H1 (cell line): ENCODE measurements at regions of chr15 and their contacts with region 1.

Region 1: DNA sequence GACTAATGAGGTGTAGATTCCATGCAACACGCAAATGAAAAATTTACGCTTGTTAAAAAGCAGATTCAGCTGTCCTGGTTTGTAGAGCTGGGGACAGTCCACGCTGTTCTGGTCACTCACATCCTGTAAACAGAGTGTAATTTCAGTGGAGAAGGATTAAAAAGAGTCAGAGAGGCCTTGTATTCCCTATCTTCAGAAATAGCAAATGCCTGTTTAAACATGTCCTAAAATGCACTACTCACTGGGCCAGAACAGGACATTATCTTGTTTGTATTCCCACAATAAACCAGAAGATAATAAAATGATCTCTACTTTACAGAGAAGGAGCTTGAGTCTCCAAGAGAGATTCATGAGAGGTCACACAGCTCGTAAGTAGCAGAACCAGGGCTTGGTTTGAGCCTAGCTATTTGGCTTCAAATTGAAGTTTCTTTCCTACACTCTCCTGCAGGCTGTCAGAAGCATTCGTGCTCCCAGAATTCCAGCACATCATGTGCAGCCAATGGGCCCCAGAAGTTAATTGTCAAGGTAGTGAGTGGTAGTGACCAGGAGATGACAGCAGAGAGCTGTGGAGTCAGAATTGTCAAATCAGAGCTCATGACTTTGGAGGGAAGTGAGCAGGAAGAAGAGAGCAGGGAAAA is 242.5 kb downstream of the ATP8B4 start:
- DNase-seq: peak; percentile 43 to 49
- H3K4me3 ChIP-seq: no peak overlapping the region
- H3K27ac ChIP-seq: no peak overlapping the region
- H3K4me1 ChIP-seq: peaks cover 0 to 5% (median 0%) of the 10 kb centered on the region in 4 experiments; a peak in 1 of 7 replicates
- H3K27me3 ChIP-seq: no peaks in the 10 kb centered on the region
- CTCF ChIP-seq: peak; percentile 52 to 94 (median 91)
- EP300 ChIP-seq: no peak
- POLR2A ChIP-seq: no peak
- RAD21 ChIP-seq: peak; percentile 98

Region 2: DNA sequence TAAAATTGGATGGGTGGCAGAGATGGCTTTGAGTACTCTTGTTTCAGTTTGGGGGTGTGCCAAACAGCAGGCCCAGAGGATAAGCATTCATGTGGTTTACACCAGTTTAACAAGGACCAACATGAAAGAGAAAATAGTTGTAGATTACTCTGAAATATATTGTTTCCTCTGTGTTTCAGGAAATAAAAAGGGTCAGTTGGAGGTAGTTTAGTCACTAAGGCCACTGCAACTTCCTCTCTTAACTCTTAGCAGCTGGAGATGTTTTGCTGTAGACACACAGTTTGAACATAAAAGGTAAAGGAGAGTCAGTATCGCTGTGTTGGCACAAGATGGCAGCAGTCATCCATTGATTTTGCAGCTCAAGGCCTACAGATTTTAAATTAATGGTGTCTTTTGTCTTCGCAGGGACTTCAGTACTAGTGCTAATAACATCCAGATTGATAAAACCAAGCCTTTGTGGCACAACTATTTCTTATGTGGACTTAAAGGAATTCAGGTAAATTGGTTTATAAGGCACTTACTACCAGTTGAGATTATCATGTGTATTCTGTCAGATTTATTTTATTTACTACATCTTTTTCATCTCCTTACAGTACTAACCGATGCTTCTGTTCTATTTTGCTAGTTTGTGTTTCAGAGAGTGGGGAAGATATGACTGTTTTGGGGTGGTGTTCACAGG is 640.9 kb before region 1 on chr15:
- CTCF ChIA-PET with region 1: interaction called, 37 read pairs
- POLR2A ChIA-PET with region 1: no interaction called
- DNase-seq: peak in 1 of 2 experiments; percentile 59
- H3K4me3 ChIP-seq: no peak overlapping the region
- H3K27ac ChIP-seq: no peak overlapping the region
- H3K4me1 ChIP-seq: 0 out of 7 replicates have a peak, but pooled peaks cover 0 to 2% (median 0%) of the 10 kb centered on the region in 4 experiments
- H3K27me3 ChIP-seq: no peaks in the 10 kb centered on the region
- CTCF ChIP-seq: peak in 2 of 3 experiments; percentile 80 to 88; a peak in 3 of 4 replicates
- EP300 ChIP-seq: no peak
- POLR2A ChIP-seq: no peak
- RAD21 ChIP-seq: peak; percentile 95 to 97

Region 3: GRCh38 chr15:49863431-49864205 is 12.9 kb before region 1 on chr15:
- CTCF ChIA-PET with region 1: interaction called, 38 read pairs
- POLR2A ChIA-PET with region 1: no interaction called
- DNase-seq: no peak
- H3K4me3 ChIP-seq: no peak overlapping the region
- H3K27ac ChIP-seq: no peak overlapping the region
- H3K4me1 ChIP-seq: no peaks in the 10 kb centered on the region
- H3K27me3 ChIP-seq: no peaks in the 10 kb centered on the region
- CTCF ChIP-seq: no peak
- EP300 ChIP-seq: no peak
- POLR2A ChIP-seq: no peak
- RAD21 ChIP-seq: no peak

Region 4: DNA sequence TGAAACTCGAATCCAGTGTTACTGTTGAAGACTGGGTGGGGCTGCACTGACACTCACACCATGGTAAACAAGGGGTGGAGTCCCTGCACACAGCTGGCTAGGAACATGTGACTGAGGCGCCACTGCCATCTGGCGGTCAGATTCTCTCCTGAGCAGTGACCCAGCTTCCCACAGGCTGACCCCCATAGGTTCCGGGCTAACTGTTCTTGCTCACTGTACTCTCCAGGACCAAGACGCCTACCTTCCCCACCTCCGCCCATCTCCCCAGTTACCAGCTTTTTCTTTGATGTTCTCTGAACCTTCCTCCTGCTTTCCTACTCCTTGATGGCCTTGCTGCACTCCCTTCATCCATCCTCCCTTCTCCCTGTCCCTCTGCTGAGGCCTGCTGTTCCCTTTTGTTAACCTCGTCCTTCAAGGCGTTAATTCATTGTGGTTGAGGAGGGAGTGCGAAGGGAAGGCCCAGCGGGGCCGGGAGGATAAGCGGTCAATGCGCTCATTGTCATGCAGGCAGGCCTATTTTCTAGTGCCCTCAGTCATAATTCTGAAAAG is 127.3 kb after region 1 on chr15:
- CTCF ChIA-PET with region 1: interaction called, 79 read pairs
- POLR2A ChIA-PET with region 1: no interaction called
- DNase-seq: peak; percentile 86 to 92
- H3K4me3 ChIP-seq: peak overlapping the region in 1 of 4 experiments; percentile 41; a peak in 2 of 8 replicates
- H3K27ac ChIP-seq: no peak overlapping the region
- H3K4me1 ChIP-seq: peaks cover 0 to 4% (median 1%) of the 10 kb centered on the region in 4 experiments; a peak in 1 of 7 replicates
- H3K27me3 ChIP-seq: no peaks in the 10 kb centered on the region; a peak in 1 of 7 replicates
- CTCF ChIP-seq: peak; percentile 82 to 97 (median 95)
- EP300 ChIP-seq: no peak
- POLR2A ChIP-seq: no peak
- RAD21 ChIP-seq: peak; percentile 87 to 89

Region 5: GRCh38 chr15:50057905-50058639 is 181.6 kb after region 1 on chr15:
- CTCF ChIA-PET with region 1: interaction called, 92 read pairs
- POLR2A ChIA-PET with region 1: no interaction called
- DNase-seq: no peak
- H3K4me3 ChIP-seq: no peak overlapping the region
- H3K27ac ChIP-seq: no peak overlapping the region
- H3K4me1 ChIP-seq: peaks cover 0 to 4% (median under 1%) of the 10 kb centered on the region in 4 experiments; a peak in 2 of 7 replicates
- H3K27me3 ChIP-seq: no peaks in the 10 kb centered on the region
- CTCF ChIP-seq: no peak
- EP300 ChIP-seq: no peak
- POLR2A ChIP-seq: no peak
- RAD21 ChIP-seq: no peak

Region 6: DNA sequence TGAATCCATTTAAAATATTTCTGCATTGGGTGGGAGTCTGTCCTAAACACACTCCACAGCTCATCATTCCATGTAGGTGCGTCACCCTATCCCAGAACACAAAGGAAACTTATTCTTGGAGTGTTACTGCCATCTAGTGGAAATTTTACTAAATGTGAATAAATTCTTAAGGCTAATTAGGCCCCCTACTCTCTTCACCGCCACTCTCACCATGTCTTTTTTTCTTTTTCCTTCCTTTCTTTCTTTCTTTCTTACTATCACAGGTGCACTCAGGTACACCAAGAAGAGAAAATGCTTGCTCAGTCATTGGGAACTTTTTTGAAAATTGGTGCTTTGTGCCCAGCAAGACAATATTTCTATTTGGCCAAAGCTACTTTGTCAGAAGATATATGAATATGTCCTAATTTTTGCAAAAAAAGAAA is 268.9 kb after region 1 on chr15:
- CTCF ChIA-PET with region 1: interaction called, 12 read pairs
- POLR2A ChIA-PET with region 1: no interaction called
- DNase-seq: peak in 1 of 2 experiments; percentile 7
- H3K4me3 ChIP-seq: no peak overlapping the region
- H3K27ac ChIP-seq: no peak overlapping the region
- H3K4me1 ChIP-seq: no peaks in the 10 kb centered on the region
- H3K27me3 ChIP-seq: no peaks in the 10 kb centered on the region
- CTCF ChIP-seq: peak in 2 of 3 experiments; percentile 39 to 46; a peak in 3 of 4 replicates
- EP300 ChIP-seq: no peak
- POLR2A ChIP-seq: no peak
- RAD21 ChIP-seq: peak; percentile 79 to 82